H1 (cell line): ENCODE measurements at regions of chr1 and their contacts with region 1.

Region 1: GRCh38 chr1:182662121-182662890 is 22.1 kb downstream of the RGS8 start:
- DNase-seq: no peak
- H3K4me3 ChIP-seq: peak overlapping the region in 1 of 4 experiments; percentile 35; a peak in 2 of 8 replicates
- H3K27ac ChIP-seq: no peak overlapping the region
- H3K4me1 ChIP-seq: peaks cover 5 to 21% (median 17%) of the 10 kb centered on the region in 4 experiments; a peak in 6 of 7 replicates
- H3K27me3 ChIP-seq: peaks cover 0 to 3% (median 0%) of the 10 kb centered on the region in 4 experiments; a peak in 2 of 7 replicates
- CTCF ChIP-seq: no peak
- EP300 ChIP-seq: no peak
- POLR2A ChIP-seq: no peak
- RAD21 ChIP-seq: no peak; a peak in 1 of 4 replicates

Region 2: GRCh38 chr1:182629499-182630096 is 32.7 kb before region 1 on chr1:
- CTCF ChIA-PET with region 1: interaction called, 10 read pairs
- POLR2A ChIA-PET with region 1: interaction called, 3 read pairs
- DNase-seq: no peak
- H3K4me3 ChIP-seq: no peak overlapping the region
- H3K27ac ChIP-seq: no peak overlapping the region
- H3K4me1 ChIP-seq: peaks cover 6 to 21% (median 15%) of the 10 kb centered on the region in 4 experiments; a peak in 6 of 7 replicates
- H3K27me3 ChIP-seq: no peaks in the 10 kb centered on the region
- CTCF ChIP-seq: no peak
- EP300 ChIP-seq: no peak
- POLR2A ChIP-seq: no peak
- RAD21 ChIP-seq: no peak

Region 3: GRCh38 chr1:182674346-182675246 is 12.3 kb after region 1 on chr1:
- CTCF ChIA-PET with region 1: interaction called, 29 read pairs
- POLR2A ChIA-PET with region 1: interaction called, 4 read pairs
- DNase-seq: no peak
- H3K4me3 ChIP-seq: no peak overlapping the region
- H3K27ac ChIP-seq: no peak overlapping the region
- H3K4me1 ChIP-seq: peaks cover 6 to 15% (median 7%) of the 10 kb centered on the region in 4 experiments
- H3K27me3 ChIP-seq: peaks cover 0 to 4% (median 0%) of the 10 kb centered on the region in 4 experiments; a peak in 1 of 7 replicates
- CTCF ChIP-seq: no peak
- EP300 ChIP-seq: no peak
- POLR2A ChIP-seq: no peak
- RAD21 ChIP-seq: no peak; a peak in 1 of 4 replicates

Region 4: GRCh38 chr1:182707122-182707521 is 44.8 kb after region 1 on chr1:
- CTCF ChIA-PET with region 1: no interaction called
- POLR2A ChIA-PET with region 1: no interaction called
- DNase-seq: no peak
- H3K4me3 ChIP-seq: no peak overlapping the region
- H3K27ac ChIP-seq: no peak overlapping the region
- H3K4me1 ChIP-seq: peaks cover 0 to 10% (median 4%) of the 10 kb centered on the region in 4 experiments; a peak in 4 of 7 replicates
- H3K27me3 ChIP-seq: no peaks in the 10 kb centered on the region
- CTCF ChIP-seq: no peak
- EP300 ChIP-seq: no peak
- POLR2A ChIP-seq: no peak
- RAD21 ChIP-seq: no peak

Region 5: GRCh38 chr1:182789138-182790076 is 127.1 kb after region 1 on chr1 and contains the start of gene NPL:
- CTCF ChIA-PET with region 1: interaction called, 89 read pairs
- POLR2A ChIA-PET with region 1: no interaction called
- DNase-seq: peak in 1 of 2 experiments; percentile 87
- H3K4me3 ChIP-seq: peak within 1 kb of the TSS; percentile 46 to 65 (median 56)
- H3K27ac ChIP-seq: no peak within 1 kb of the TSS
- H3K4me1 ChIP-seq: no peaks in the 10 kb centered on the region
- H3K27me3 ChIP-seq: peaks cover 15 to 36% (median 24%) of the 10 kb centered on the region in 4 experiments
- CTCF ChIP-seq: no peak
- EP300 ChIP-seq: peak in 1 of 2 experiments; percentile 20; a peak in 1 of 3 replicates
- POLR2A ChIP-seq: peak in 1 of 2 experiments; percentile 69; a peak in 2 of 3 replicates
- RAD21 ChIP-seq: 0 out of 4 replicates have a peak, but pooled peaks of 1 of the 2 experiments have one; percentile 2
- total RNA-seq, gene NPL: 2.3 and 4.4 TPM in 2 replicates